Thyroid gland (tissue), 4 donors: ENCODE measurements at regions of chr7 and their contacts with region 1.

Region 1: GRCh38 chr7:104848138-104848990 is 165.6 kb upstream of the KMT2E start:
- DNase-seq: peak; percentile 33 to 43
- H3K4me3 ChIP-seq: no peak overlapping the region
- H3K27ac ChIP-seq: no peak overlapping the region
- H3K4me1 ChIP-seq: no peaks in the 10 kb centered on the region
- H3K27me3 ChIP-seq: no peaks in the 10 kb centered on the region
- CTCF ChIP-seq: peak; percentile 41 to 87 (median 73)
- POLR2A ChIP-seq: no peak

Region 2: DNA sequence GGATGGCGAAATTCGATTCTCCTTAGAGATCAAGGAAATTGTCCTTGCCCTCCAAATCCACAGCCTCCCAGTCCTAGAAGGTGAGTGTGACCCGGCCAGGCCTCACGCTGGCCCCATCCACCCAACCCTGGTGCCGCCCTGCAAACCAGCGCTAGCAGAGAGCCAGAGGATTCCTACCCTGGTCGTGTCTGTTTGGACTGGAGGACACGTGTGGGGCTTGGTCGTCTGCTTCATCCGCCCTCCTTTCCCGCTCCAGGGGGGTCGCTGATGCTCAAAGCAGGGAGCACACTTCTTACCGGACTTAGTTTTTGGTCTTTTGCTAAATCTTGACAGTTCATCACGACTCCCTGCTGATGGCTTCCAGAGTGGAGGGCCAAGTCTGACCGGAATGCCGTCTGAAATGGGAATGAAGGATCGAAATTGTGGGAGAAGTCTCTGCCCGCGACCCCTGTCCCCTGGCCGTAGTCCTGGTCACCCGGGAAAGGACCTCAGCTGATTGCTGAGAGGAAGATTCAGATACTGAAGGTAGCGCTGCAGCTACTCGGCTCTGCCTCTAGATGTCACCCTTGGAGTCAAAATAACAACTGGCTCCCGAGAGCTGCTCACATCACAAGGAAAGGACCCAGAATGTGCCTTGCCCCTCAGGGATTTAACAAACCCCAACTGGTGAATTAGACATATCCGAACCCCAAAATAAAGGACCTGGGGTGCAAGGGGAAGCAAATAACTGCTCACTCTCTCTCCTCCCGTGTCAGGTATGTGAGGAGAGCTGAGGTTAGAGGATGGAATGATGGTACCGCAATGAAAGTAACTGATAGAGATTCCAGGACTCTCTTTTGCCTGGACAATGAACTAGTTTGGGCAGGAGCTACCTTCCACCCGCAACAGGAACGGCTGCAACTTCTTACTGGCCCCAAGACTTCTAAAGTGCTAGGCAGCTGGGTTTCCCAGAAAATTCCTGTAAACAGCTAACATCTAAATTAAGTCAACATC is 617.0 kb before region 1 on chr7:
- intact Hi-C with region 1: loop called (anchors 5 kb)
- DNase-seq: peak; percentile 40 to 46
- H3K4me3 ChIP-seq: no peak overlapping the region
- H3K27ac ChIP-seq: no peak overlapping the region
- H3K4me1 ChIP-seq: no peaks in the 10 kb centered on the region
- H3K27me3 ChIP-seq: no peaks in the 10 kb centered on the region
- CTCF ChIP-seq: peak; percentile 17 to 80 (median 74)
- POLR2A ChIP-seq: no peak

Region 3: GRCh38 chr7:105906695-105907094 is 1058.3 kb after region 1 on chr7:
- intact Hi-C with region 1: no loop called
- DNase-seq: peak; percentile 48 to 68
- H3K4me3 ChIP-seq: no peak overlapping the region
- H3K27ac ChIP-seq: no peak overlapping the region
- H3K4me1 ChIP-seq: no peaks in the 10 kb centered on the region
- H3K27me3 ChIP-seq: no peaks in the 10 kb centered on the region
- CTCF ChIP-seq: no peak
- POLR2A ChIP-seq: no peak